ENCODE measurements at regions of chr12 and their contacts with region 1.

Region 1: GRCh38 chr12:89618107-89618862 is 90.4 kb downstream of the ATP2B1 start:
- DNase-seq: no peak
- ATAC-seq: no peak
- H3K4me3 ChIP-seq: no peak overlapping the region
- H3K27ac ChIP-seq: no peak overlapping the region
- H3K4me1 ChIP-seq: no peaks in the 10 kb centered on the region
- H3K27me3 ChIP-seq: no peaks in the 10 kb centered on the region
- CTCF ChIP-seq: no peak
- POLR2A ChIP-seq: no peak

Region 2: DNA sequence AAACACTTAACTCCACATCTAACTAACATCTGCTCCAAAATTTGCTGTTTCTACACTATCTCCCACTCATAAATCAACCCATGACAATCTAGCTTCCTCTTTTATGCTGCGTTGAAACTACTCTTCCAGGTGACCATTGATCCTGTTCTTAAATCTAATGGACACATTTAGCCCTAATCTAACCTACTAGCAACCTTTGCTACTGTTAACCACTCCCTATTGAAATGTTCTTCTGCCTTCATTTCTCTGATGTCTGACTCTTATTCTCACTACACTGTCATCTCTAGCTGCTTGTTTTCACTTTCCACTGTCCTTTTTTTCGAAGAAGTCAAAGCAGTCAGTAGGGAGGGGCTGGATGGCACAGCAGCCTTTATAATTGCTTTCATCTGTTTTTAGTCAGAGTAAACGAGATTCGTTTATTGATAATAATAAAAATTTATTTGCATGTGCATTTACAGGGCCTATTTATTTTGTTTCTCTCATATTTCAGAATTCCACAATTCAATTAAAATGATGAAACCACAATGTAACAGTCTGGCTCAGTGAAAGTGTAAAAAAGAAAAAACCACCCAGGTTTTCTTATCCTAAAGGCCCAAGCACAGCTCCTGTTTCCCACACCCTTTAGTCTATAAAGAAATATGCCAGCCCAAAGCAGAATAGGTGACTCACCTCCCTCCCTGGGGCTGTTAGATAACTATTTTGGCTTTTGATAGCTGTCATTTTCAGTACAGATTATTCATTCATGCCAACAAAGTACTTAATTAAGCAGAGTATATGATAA is 45.5 kb after region 1 on chr12:
- in situ Hi-C with region 1: no loop called
- intact Hi-C with region 1: loop called (anchors 1 kb)
- DNase-seq: no peak
- ATAC-seq: peak in 1 of 2 donors; percentile 44
- H3K4me3 ChIP-seq: no peak overlapping the region
- H3K27ac ChIP-seq: peak overlapping the region in 2 of 4 donors; percentile 1 to 4
- H3K4me1 ChIP-seq: peaks cover 33 to 67% of the 10 kb centered on the region in 2 donors
- H3K27me3 ChIP-seq: no peaks in the 10 kb centered on the region
- CTCF ChIP-seq: no peak
- POLR2A ChIP-seq: no peak

Measured in gastrocnemius medialis (tissue), 4 donors.